CD8-positive, alpha-beta memory T cell (primary cell): ENCODE measurements at regions of chr1 and their contacts with region 1.

Region 1: DNA sequence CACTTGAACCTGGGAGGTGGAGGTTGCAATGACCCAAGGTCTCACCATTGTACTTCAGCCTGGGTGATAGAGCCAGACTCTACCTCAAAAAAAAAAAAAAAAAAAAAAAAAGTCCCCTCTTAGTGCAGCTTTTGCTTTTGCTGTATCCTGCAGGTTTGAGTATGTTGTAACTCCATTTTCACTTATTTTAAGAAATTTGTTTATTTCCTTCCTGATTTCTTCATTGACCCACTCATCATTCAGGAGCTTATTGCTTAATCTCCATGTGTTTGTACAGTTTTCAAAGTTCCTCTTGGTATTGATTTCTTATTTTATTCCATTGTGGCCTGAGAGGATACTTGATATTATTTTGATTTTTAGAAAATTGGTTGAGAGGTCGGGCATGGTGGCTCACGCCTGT is 50.9 kb upstream of the AK4 start:
- DNase-seq: no peak
- H3K4me3 ChIP-seq: no peak overlapping the region
- H3K4me3 Mint-ChIP-seq: no peak overlapping the region
- H3K27ac ChIP-seq: no peak overlapping the region
- H3K27ac Mint-ChIP-seq: no peak overlapping the region
- H3K4me1 ChIP-seq: no peaks in the 10 kb centered on the region
- H3K4me1 Mint-ChIP-seq: no peaks in the 10 kb centered on the region
- H3K27me3 ChIP-seq: no peaks in the 10 kb centered on the region
- H3K27me3 Mint-ChIP-seq: peaks cover 4 to 15% of the 10 kb centered on the region in 2 donors

Region 2: DNA sequence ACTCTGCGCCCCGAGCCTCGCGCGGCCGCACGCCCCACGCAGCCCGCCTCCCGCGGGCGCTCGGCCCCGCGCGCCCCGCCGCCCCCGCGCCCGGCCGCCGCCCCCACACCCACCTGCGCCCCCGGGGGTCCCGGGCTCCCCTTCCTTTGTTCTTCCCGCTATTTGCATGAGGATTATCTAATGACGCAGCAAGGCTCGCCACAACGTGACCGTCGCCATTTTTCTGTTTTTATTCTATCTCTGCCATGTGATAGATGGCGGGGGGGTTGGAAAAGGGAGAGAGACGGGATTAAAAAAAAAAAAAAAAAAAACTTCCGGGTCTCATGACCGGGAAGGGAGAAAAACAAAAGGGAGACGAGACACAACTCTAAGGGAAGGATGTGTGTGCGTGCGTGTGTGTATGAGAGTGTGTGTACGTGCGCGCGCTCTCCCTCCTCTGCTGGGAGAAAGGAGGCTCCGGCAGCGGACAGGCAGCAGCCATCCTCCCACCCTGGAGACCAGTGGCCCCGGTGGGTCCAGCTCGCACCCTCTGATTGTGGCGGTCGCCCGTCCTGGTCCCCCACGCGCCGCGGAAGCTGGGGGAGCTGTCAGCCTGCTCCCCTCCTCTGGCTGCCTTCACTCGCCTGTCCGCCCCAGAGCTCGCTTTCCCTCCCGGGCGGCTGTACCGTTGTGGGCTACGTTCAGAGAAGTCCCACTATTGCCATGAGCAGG is 29.4 kb before region 1 on chr1:
- CTCF ChIA-PET with region 1: no interaction called
- POLR2A ChIA-PET with region 1: interaction called, 10 read pairs
- DNase-seq: peak; percentile 24 to 77 (median 57)
- H3K4me3 ChIP-seq: peak overlapping the region; percentile 97
- H3K4me3 Mint-ChIP-seq: peak overlapping the region; percentile 87 to 97 (median 94)
- H3K27ac ChIP-seq: peak overlapping the region; percentile 95
- H3K27ac Mint-ChIP-seq: peak overlapping the region; percentile 94 to 99 (median 97)
- H3K4me1 ChIP-seq: peaks cover 45% of the 10 kb centered on the region
- H3K4me1 Mint-ChIP-seq: peaks cover 46 to 69% (median 65%) of the 10 kb centered on the region in 3 donors
- H3K27me3 ChIP-seq: no peaks in the 10 kb centered on the region
- H3K27me3 Mint-ChIP-seq: peaks cover 0 to 3% of the 10 kb centered on the region in 2 donors